Breast epithelium (tissue), 4 donors: ENCODE measurements at regions of chr16 and their contacts with region 1.

Region 1: GRCh38 chr16:74143171-74143570 is 153.4 kb upstream of the PSMD7 start:
- DNase-seq: no peak
- H3K4me3 ChIP-seq: no peak overlapping the region
- H3K27ac ChIP-seq: no peak overlapping the region
- H3K4me1 ChIP-seq: no peaks in the 10 kb centered on the region
- H3K27me3 ChIP-seq: no peaks in the 10 kb centered on the region
- CTCF ChIP-seq: no peak
- POLR2A ChIP-seq: no peak

Region 2: DNA sequence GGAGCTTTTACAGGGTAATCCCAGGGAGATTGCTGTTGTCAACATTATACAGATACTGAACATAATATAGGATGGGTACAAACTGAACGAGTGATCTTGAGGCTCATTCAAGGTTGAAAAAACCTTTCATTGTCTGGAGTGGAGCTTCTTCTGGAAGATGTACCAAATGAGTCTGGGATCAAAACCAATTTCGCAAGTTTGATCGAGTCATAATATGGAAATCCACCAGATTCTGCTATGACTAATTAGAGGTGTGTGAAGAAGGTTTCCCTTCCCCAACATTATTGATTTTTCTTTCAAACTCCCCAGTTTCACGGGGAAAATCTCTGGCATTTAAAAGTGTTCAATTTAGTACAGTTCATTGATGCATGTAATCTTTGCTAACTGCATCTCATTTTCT is 1419.4 kb before region 1 on chr16:
- intact Hi-C with region 1: no loop called
- DNase-seq: no peak
- H3K4me3 ChIP-seq: no peak overlapping the region
- H3K27ac ChIP-seq: no peak overlapping the region
- H3K4me1 ChIP-seq: no peaks in the 10 kb centered on the region
- H3K27me3 ChIP-seq: no peaks in the 10 kb centered on the region
- CTCF ChIP-seq: no peak
- POLR2A ChIP-seq: no peak

Region 3: GRCh38 chr16:74738134-74738541 is 595.0 kb after region 1 on chr16:
- intact Hi-C with region 1: loop called (anchors 10 kb)
- DNase-seq: no peak
- H3K4me3 ChIP-seq: no peak overlapping the region
- H3K27ac ChIP-seq: no peak overlapping the region
- H3K4me1 ChIP-seq: peaks cover 0 to 3% of the 10 kb centered on the region in 2 donors
- H3K27me3 ChIP-seq: no peaks in the 10 kb centered on the region
- CTCF ChIP-seq: no peak
- POLR2A ChIP-seq: no peak

Region 4: GRCh38 chr16:75868636-75869632 is 1725.8 kb after region 1 on chr16:
- intact Hi-C with region 1: no loop called
- DNase-seq: no peak
- H3K4me3 ChIP-seq: no peak overlapping the region
- H3K27ac ChIP-seq: no peak overlapping the region
- H3K4me1 ChIP-seq: no peaks in the 10 kb centered on the region
- H3K27me3 ChIP-seq: no peaks in the 10 kb centered on the region
- CTCF ChIP-seq: no peak
- POLR2A ChIP-seq: no peak